Left ventricle myocardium superior (tissue), 1 donor: ENCODE measurements at regions of chr9 and their contacts with region 1.

Region 1: GRCh38 chr9:96327694-96328352 is 25.8 kb upstream of the HSD17B3 start:
- DNase-seq: no peak
- ATAC-seq: peak; percentile 76

Region 2: DNA sequence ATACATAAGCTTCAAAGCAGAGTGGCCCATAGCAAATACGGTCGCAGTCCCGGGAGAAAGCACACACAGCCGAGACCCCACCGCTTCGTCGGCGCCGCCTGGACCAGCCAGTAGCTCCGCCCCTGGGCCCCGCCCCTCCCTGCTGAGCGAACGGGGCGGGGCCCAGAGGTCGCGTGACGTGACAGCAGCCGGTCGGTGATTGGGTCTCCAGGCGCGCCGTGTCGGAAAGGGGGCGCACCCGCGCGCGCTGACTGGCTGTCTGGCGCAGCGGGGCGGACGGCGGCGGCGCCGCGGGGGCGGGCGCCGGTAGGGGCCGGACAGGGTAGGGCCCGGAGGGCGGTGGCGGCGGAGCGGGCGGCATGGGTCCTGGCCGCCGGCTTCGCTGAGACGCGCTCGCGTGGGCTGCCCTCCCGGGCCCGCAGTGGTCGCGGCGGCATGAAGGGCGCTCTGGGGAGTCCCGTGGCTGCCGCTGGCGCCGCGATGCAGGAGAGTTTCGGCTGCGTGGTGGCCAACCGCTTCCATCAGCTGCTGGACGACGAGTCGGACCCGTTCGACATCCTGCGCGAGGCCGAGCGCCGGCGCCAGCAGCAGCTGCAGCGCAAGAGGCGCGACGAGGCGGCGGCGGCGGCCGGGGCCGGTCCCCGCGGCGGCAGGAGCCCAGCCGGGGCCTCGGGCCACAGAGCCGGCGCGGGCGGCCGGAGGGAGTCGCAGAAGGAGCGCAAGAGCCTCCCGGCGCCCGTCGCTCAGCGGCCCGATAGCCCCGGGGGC is 122.2 kb after region 1 on chr9 and contains the start of gene HABP4:
- intact Hi-C with region 1: loop called (anchors 5 kb)
- DNase-seq: peak; percentile 100
- ATAC-seq: peak; percentile 99
- total RNA-seq, gene HABP4: 22.7 TPM

Region 3: GRCh38 chr9:96574931-96575351 is 247.1 kb after region 1 on chr9:
- intact Hi-C with region 1: no loop called
- DNase-seq: no peak
- ATAC-seq: peak; percentile 65

Region 4: DNA sequence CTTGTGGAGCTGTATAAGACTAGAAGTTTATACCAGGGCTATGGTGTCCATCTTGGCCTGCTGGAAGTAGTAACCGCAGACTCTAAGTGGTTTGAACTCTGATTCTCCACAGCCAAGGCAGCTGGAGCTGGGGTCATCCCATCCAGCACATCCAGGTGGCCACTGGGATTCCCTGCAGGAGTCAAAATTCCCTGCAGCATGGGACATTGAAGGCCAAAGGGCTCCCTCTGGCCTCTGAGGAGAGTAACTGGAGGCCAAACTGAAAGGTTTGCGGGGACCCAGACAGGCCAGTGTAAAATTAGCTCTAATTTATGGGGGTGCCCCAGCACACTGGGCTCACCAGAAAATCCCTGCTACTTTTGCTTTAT is 339.5 kb after region 1 on chr9:
- intact Hi-C with region 1: loop called (anchors 5 kb)
- DNase-seq: no peak
- ATAC-seq: no peak